H1 (cell line): ENCODE measurements at regions of chr2 and their contacts with region 1.

Region 1: GRCh38 chr2:61888267-61889055 is at the start of gene CCT4:
- DNase-seq: peak; percentile 46 to 99
- H3K4me3 ChIP-seq: peak within 1 kb of the TSS; percentile 96 to 100 (median 98)
- H3K27ac ChIP-seq: peak within 1 kb of the TSS; percentile 97
- H3K4me1 ChIP-seq: peaks cover 0 to 2% (median 0%) of the 10 kb centered on the region in 4 experiments; a peak in 3 of 7 replicates
- H3K27me3 ChIP-seq: no peaks in the 10 kb centered on the region
- CTCF ChIP-seq: no peak
- EP300 ChIP-seq: no peak
- POLR2A ChIP-seq: peak; percentile 98 to 99
- RAD21 ChIP-seq: no peak; a peak in 1 of 4 replicates
- total RNA-seq, gene CCT4: 342 and 359 TPM in 2 replicates

Region 2: DNA sequence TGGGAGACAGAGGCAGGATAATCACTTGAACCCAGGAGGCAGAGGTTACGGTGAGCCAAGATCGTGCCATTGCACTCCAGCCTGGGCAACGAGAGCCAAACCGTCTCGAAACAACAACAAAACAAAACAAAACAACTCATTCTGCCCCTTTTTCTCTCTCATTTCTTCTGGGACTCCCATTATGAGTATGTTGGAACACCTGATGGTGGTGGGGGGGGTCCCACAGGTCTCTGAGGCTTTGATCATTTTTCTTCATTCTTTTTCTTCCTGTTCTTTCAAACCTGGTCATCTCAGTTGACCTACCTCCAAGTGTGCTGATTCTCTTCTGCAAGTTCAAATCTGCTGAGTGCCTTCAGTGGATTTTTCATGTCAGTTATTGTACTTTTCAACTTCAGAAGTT is 26.4 kb before region 1 on chr2:
- CTCF ChIA-PET with region 1: no interaction called
- POLR2A ChIA-PET with region 1: interaction called, 13 read pairs
- DNase-seq: no peak
- H3K4me3 ChIP-seq: no peak overlapping the region
- H3K27ac ChIP-seq: no peak overlapping the region
- H3K4me1 ChIP-seq: no peaks in the 10 kb centered on the region
- H3K27me3 ChIP-seq: no peaks in the 10 kb centered on the region
- CTCF ChIP-seq: no peak
- EP300 ChIP-seq: no peak
- POLR2A ChIP-seq: no peak
- RAD21 ChIP-seq: no peak

Region 3: GRCh38 chr2:62074233-62074632 is 185.8 kb after region 1 on chr2:
- CTCF ChIA-PET with region 1: no interaction called
- POLR2A ChIA-PET with region 1: no interaction called
- DNase-seq: no peak
- H3K4me3 ChIP-seq: peak overlapping the region in 1 of 4 experiments; percentile 32; a peak in 1 of 8 replicates
- H3K27ac ChIP-seq: peak overlapping the region; percentile 10; the same call in 1 of the 2 replicates
- H3K4me1 ChIP-seq: peaks cover 11 to 17% (median 14%) of the 10 kb centered on the region in 4 experiments; a peak in 6 of 7 replicates
- H3K27me3 ChIP-seq: no peaks in the 10 kb centered on the region
- CTCF ChIP-seq: no peak
- EP300 ChIP-seq: no peak; a peak in 1 of 3 replicates
- POLR2A ChIP-seq: no peak
- RAD21 ChIP-seq: no peak